HEK293T (cell line): ENCODE measurements at regions of chr5 and their contacts with region 1.

Region 1: GRCh38 chr5:138148811-138149210 is 9.6 kb upstream of the NME5 start:
- DNase-seq: no peak

Region 2: GRCh38 chr5:138178516-138179276 is 29.9 kb after region 1 on chr5 and contains the starts of genes BRD8 and KIF20A:
- CTCF ChIA-PET with region 1: interaction called, 4 read pairs
- POLR2A ChIA-PET with region 1: interaction called, 14 read pairs
- DNase-seq: peak; percentile 89